ENCODE measurements at regions of chr17 and their contacts with region 1.

Region 1: DNA sequence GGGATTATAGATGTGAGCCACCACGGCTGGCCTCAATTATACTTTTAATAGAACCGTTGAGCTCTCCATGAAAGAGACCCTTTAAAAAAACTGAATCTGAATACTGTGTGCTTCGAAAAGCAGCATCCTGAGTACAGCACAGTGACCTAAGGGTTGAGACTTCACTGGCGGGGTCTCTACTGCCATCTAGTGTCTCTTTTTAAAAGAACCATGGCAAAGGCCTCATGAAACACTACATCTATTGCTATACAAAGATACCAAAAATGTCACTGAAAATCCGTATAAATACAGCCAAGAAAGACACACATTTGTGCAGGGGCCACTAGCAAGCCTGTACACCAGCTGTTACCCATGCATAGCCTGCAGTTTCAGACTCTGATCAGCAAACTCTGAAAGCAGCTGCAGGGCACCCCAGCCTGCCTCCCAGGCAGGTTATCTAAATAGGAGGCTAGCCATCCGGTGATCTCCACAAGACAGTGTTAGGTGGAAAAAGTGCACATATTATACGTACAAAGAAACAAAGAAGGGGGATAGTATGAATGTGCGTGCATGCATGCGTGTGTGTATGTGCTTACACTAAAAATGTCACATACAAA is 35.3 kb downstream of the NPLOC4 start:
- DNase-seq: peak; percentile 55
- H3K4me3 Mint-ChIP-seq: no peak overlapping the region
- H3K27ac Mint-ChIP-seq: peak overlapping the region; percentile 41
- H3K4me1 Mint-ChIP-seq: peaks cover 2% of the 10 kb centered on the region
- H3K27me3 Mint-ChIP-seq: no peaks in the 10 kb centered on the region

Region 2: GRCh38 chr17:81253358-81254131 is 348.1 kb before region 1 on chr17:
- CTCF ChIA-PET with region 1: interaction called, 3 read pairs
- intact Hi-C with region 1: loop called (anchors 1 kb)
- DNase-seq: peak; percentile 68
- H3K4me3 Mint-ChIP-seq: no peak overlapping the region
- H3K27ac Mint-ChIP-seq: no peak overlapping the region
- H3K4me1 Mint-ChIP-seq: peaks cover 5% of the 10 kb centered on the region
- H3K27me3 Mint-ChIP-seq: no peaks in the 10 kb centered on the region

Region 3: DNA sequence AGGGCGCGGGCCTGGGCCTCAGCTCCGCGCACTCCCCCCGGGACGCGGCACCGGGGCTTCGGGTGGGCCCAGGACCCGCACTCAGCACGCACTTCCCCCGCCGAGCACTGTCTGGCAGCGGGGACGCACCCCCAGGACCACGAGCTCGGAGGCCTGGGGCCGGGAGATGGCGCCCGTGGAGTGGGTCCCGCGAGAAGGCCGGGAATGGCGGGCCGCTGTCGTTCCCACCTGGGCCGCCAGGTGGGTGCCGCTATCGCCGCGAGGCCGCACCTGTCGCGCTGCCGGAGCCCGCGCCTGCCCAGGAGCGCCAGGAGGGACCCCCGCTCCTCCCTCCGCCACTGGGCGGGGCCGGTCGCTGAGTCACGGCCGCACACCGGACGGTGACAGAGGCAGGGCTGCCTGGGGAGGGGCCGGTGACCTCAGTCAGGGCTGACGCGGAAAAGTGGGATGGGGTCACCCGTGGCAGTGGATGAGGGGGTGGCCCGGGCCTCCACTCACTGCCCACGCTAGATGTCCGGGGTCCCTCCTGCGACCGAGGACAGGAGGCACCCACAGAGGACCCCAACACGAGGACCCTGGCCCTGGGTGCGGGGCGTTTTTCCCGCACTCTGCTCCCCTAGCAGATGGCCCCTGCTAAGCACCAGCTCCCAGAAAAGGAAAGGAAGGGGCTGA is 82.2 kb before region 1 on chr17:
- CTCF ChIA-PET with region 1: interaction called, 5 read pairs
- intact Hi-C with region 1: loop called (anchors 2 kb)
- DNase-seq: peak; percentile 73
- H3K4me3 Mint-ChIP-seq: peak overlapping the region; percentile 9
- H3K27ac Mint-ChIP-seq: no peak overlapping the region
- H3K4me1 Mint-ChIP-seq: peaks cover 18% of the 10 kb centered on the region
- H3K27me3 Mint-ChIP-seq: no peaks in the 10 kb centered on the region

Region 4: GRCh38 chr17:81583589-81584342 is 17.9 kb before region 1 on chr17:
- CTCF ChIA-PET with region 1: interaction called, 13 read pairs
- intact Hi-C with region 1: no loop called
- DNase-seq: no peak
- H3K4me3 Mint-ChIP-seq: no peak overlapping the region
- H3K27ac Mint-ChIP-seq: no peak overlapping the region
- H3K4me1 Mint-ChIP-seq: peaks cover 11% of the 10 kb centered on the region
- H3K27me3 Mint-ChIP-seq: no peaks in the 10 kb centered on the region

Region 5: DNA sequence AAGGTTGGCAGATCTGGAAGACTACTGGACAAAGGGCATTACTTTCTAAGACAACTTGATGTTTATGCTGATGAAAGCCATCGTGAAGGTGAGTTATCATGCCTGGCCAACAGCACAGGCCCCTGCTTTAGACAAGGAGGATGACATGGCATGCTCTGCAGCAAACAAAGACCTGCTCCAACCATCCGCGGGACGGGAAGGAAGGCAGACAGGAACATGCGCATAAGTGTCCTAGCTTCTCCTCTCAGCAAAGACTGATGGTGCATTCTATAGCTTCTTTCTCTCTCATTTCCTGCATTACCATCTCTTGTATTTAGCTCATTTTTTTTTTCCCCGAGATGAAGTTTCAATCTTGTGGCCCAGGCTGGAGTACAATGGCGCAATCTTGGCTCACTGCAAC is 29.9 kb after region 1 on chr17:
- CTCF ChIA-PET with region 1: interaction called, 12 read pairs
- intact Hi-C with region 1: no loop called
- DNase-seq: no peak
- H3K4me3 Mint-ChIP-seq: no peak overlapping the region
- H3K27ac Mint-ChIP-seq: no peak overlapping the region
- H3K4me1 Mint-ChIP-seq: peaks cover 27% of the 10 kb centered on the region
- H3K27me3 Mint-ChIP-seq: no peaks in the 10 kb centered on the region

Region 6: DNA sequence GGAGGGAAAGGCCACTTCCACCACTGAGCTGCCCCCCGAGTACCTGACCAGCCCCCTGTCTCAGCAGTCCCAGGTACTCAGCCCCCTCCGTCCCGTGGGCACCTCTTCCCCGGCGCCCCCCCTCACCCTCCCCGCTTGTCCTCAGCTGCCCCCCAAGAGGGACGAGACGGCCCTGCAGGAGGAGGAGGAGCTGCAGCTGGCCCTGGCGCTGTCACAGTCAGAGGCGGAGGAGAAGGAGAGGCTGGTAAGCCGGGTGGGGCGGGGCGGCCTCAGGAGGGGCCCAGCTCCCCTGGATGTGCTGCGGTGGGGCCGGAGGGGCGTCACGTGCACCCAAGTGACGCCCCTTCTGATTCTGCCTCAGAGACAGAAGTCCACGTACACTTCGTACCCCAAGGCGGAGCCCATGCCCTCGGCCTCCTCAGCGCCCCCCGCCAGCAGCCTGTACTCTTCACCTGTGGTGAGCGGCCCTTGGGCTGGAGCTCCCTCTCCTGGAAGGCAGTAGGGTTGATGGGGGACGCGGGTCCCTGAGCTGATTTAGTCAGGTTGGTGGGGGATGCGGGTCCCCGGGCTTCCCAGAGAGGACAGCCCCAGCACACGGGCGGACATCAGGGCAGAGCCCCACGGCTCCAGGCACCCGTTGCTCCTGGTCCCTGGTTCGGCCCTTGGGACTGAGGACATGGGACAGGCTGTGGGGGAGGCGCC is 92.0 kb after region 1 on chr17:
- CTCF ChIA-PET with region 1: no interaction called
- intact Hi-C with region 1: no loop called
- DNase-seq: no peak
- H3K4me3 Mint-ChIP-seq: no peak overlapping the region
- H3K27ac Mint-ChIP-seq: no peak overlapping the region
- H3K4me1 Mint-ChIP-seq: peaks cover 6% of the 10 kb centered on the region
- H3K27me3 Mint-ChIP-seq: no peaks in the 10 kb centered on the region